Prostate gland (tissue), 2 donors: ENCODE measurements at regions of chr16 and their contacts with region 1.

Region 1: DNA sequence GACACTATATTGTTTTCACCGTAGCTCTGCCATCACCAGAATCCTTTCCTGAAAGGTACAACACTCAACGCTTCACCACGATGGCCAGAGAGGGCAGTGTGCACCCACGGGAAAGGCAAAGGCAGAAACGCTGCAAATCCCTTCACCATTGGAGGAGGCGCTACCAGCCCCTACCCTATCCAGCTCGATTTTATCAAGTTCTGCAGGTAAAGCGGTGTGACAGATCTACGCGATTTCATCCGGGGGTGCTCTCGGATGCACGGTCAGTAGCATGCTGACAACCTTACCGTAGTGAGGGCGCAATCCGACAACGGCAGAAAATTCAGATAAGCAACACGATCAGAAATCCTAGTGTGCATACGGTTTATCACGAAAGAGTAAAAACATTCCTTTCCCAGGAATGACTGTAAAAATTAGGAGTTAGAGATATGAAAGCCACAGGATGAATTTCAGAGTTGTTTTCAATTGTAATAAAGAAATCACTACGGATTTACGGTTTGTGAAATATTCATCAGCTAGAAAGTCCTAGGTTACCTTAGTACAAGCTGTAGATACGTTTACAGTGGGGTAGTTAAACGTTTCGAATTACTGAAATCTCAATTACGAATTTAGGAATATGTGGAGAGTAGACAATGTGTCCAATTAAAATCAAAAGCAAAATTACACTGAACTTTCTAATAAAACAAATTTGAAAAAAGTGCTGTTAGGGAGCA is 1.8 kb downstream of the NETO2 start:
- DNase-seq: peak; percentile 70
- H3K4me3 ChIP-seq: peak overlapping the region; percentile 28 to 42
- H3K27ac ChIP-seq: no peak overlapping the region
- H3K4me1 ChIP-seq: peaks cover 4% of the 10 kb centered on the region
- H3K27me3 ChIP-seq: no peaks in the 10 kb centered on the region
- CTCF ChIP-seq: peak in 3 of 4 experiments; percentile 68 to 80 (median 74)
- POLR2A ChIP-seq: no peak

Region 2: DNA sequence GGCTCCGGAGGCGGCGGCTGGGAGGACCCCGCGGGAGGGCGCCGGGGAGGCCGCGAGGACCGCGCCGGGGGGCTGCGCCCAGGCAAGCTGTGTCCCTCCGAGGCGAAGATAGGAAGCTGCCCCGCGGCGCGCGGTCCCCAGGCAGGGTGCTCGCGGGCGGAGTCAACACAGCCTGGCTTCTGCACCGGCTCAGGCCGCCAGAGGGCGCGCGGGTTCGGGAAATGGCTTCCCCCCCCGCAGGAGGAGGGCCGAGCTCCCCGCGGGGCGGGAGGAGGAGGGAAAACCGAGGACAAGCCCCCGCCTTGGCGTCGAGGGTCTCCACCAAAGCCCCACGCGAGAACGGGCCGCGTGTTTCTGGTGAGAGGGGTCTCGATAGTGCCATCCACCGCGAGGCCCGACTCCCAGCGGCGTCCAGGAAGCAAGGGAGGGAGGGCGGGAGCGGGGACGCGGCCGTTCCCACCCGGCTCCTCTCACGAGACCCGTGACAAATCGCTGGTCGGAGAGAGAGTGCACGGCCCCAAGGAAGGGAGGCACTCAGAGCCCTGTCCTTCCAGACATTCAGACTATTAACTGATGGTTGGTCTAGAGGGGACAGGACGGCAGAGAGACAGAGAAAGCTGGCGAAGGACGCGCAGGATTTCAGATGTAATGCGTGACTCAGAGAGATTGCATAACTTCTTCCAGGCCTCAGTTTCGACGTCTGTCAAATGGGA is 104.0 kb before region 1 on chr16:
- intact Hi-C with region 1: loop called (anchors 5 kb)
- DNase-seq: peak; percentile 82
- H3K4me3 ChIP-seq: peak overlapping the region; percentile 48 to 54
- H3K27ac ChIP-seq: peak overlapping the region in 1 of 2 donors; percentile 62
- H3K4me1 ChIP-seq: no peaks in the 10 kb centered on the region
- H3K27me3 ChIP-seq: no peaks in the 10 kb centered on the region
- CTCF ChIP-seq: peak; percentile 73 to 93 (median 86)
- POLR2A ChIP-seq: no peak

Region 3: DNA sequence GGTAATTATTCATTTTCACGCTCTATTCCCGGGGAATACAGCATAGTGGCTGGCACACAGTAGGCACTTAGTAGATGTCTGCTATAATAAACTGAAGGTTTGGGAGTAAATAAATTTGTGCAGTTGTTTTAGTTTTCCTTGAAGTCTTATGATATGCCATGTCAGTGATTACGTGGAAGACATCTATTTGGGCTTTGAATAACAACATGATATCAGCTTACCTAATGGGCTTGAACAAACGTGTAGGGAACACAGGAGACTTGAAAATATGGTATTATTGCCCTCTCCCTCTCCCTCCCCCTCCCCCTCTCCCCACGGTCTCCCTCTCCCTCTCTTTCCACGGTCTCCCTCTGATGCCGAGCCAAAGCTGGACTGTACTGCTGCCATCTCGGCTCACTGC is 38.1 kb after region 1 on chr16:
- intact Hi-C with region 1: no loop called
- DNase-seq: no peak
- H3K4me3 ChIP-seq: no peak overlapping the region
- H3K27ac ChIP-seq: no peak overlapping the region
- H3K4me1 ChIP-seq: no peaks in the 10 kb centered on the region
- H3K27me3 ChIP-seq: no peaks in the 10 kb centered on the region
- CTCF ChIP-seq: no peak
- POLR2A ChIP-seq: no peak

Region 4: DNA sequence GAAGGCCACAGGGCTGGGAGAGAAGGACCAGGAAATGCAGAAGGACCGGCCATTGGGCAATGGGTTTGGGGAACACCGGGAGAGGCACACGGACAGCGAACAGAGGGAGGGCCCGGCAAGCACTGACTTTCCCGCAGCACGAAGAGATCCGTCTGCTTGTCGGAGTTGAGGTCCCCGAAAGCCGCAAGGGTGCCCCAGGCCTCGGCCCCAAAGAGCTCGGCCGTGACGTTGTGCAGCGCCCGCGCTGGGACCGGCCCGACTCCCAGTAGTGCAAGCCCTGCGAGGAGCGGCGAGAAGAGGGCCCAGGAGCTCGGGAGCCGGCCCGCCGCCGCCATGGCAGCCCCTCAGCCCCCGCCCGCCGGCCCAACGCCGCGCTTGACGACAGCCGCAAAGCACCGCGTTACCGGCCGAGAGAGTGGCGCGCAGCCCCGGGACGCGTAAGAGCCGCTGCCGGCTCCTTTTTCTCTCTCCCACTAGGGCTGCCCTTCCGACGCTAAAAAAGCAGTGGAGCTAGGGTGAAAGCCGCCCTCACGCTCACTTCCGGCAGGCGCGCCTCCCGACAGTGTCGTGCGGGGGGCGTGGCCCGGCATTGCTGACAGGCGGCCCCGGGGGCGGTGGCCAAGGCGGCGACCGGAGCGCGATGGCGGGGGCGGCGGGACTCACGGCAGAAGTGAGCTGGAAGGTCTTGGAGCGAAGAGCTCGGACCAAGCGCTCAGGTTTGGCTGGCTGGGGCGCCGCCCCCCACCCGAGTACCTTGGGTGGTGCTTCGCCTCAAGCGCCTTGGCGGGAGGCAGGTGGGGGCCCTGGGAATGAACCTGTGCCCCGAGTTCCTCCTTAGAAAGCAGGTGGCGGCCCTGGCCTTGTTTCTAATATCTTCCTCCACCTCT is 319.0 kb after region 1 on chr16 and contains the starts of genes ITFG1 and PHKB:
- intact Hi-C with region 1: loop called (anchors 10 kb)
- DNase-seq: peak; percentile 86
- H3K4me3 ChIP-seq: peak within 1 kb of the TSS; percentile 72 to 92
- H3K27ac ChIP-seq: peak within 1 kb of the TSS; percentile 97 to 100
- H3K4me1 ChIP-seq: no peaks in the 10 kb centered on the region
- H3K27me3 ChIP-seq: no peaks in the 10 kb centered on the region
- CTCF ChIP-seq: peak in 1 of 4 experiments; percentile 37
- POLR2A ChIP-seq: peak; percentile 56
- total RNA-seq, gene ITFG1: 49.1 to 104 TPM
- total RNA-seq, gene PHKB: 70.1 to 93.7 TPM

Region 5: GRCh38 chr16:48054881-48055601 is 913.1 kb after region 1 on chr16:
- intact Hi-C with region 1: loop called (anchors 2 kb)
- DNase-seq: peak; percentile 23
- H3K4me3 ChIP-seq: no peak overlapping the region
- H3K27ac ChIP-seq: no peak overlapping the region
- H3K4me1 ChIP-seq: no peaks in the 10 kb centered on the region
- H3K27me3 ChIP-seq: no peaks in the 10 kb centered on the region
- CTCF ChIP-seq: peak in 3 of 4 experiments; percentile 40 to 54 (median 50)
- POLR2A ChIP-seq: no peak

Region 6: DNA sequence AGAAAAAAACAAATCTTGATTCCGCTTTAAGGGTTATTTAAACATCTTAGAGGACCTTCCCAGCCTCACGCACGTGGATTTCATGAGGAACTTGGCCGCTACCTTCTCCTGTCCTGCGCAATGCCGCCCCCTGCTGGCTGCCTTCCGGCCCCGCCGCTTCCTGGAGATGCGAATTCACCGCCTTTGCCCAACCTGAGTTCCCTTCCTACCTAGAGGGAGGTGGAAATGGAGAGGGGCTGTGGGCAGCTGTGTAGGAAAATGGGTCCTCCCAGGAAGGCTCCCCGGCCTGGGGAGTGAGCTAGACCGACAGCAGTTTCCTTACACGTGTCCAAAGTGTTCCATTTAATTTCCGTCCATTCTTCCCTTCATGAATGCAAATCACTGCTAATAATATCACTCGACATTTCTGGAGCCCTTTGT is 1014.9 kb after region 1 on chr16:
- intact Hi-C with region 1: loop called (anchors 5 kb)
- DNase-seq: peak; percentile 73
- H3K4me3 ChIP-seq: no peak overlapping the region
- H3K27ac ChIP-seq: no peak overlapping the region
- H3K4me1 ChIP-seq: no peaks in the 10 kb centered on the region
- H3K27me3 ChIP-seq: no peaks in the 10 kb centered on the region
- CTCF ChIP-seq: peak; percentile 78 to 83 (median 81)
- POLR2A ChIP-seq: no peak